ENCODE measurements at regions of chr16 and their contacts with region 1.

Region 1: GRCh38 chr16:69166221-69166833 is 20.6 kb upstream of the SNTB2 start:
- DNase-seq: peak in 5 of 9 experiments; percentile 21 to 60 (median 37)
- ATAC-seq: peak; percentile 86
- H3K4me3 ChIP-seq: no peak overlapping the region
- H3K4me3 Mint-ChIP-seq: peak overlapping the region; percentile 38
- H3K27ac ChIP-seq: peak overlapping the region in 1 of 2 experiments; percentile 30
- H3K27ac Mint-ChIP-seq: peak overlapping the region; percentile 75
- H3K4me1 ChIP-seq: peaks cover 13% of the 10 kb centered on the region
- H3K4me1 Mint-ChIP-seq: peaks cover 22% of the 10 kb centered on the region
- H3K27me3 ChIP-seq: no peaks in the 10 kb centered on the region
- H3K27me3 Mint-ChIP-seq: no peaks in the 10 kb centered on the region
- CTCF ChIP-seq: no peak

Region 2: GRCh38 chr16:69150146-69150865 is 16.0 kb before region 1 on chr16:
- CTCF ChIA-PET with region 1: interaction called, 10 read pairs
- POLR2A ChIA-PET with region 1: interaction called, 3 read pairs
- intact Hi-C with region 1: no loop called
- DNase-seq: peak in 7 of 9 experiments; percentile 32 to 81 (median 60)
- ATAC-seq: peak; percentile 77
- H3K4me3 ChIP-seq: no peak overlapping the region
- H3K4me3 Mint-ChIP-seq: no peak overlapping the region
- H3K27ac ChIP-seq: no peak overlapping the region
- H3K27ac Mint-ChIP-seq: no peak overlapping the region
- H3K4me1 ChIP-seq: no peaks in the 10 kb centered on the region
- H3K4me1 Mint-ChIP-seq: no peaks in the 10 kb centered on the region
- H3K27me3 ChIP-seq: no peaks in the 10 kb centered on the region
- H3K27me3 Mint-ChIP-seq: no peaks in the 10 kb centered on the region
- CTCF ChIP-seq: peak; percentile 71

Region 3: GRCh38 chr16:70610273-70611223 is 1444.2 kb after region 1 on chr16:
- CTCF ChIA-PET with region 1: no interaction called
- POLR2A ChIA-PET with region 1: no interaction called
- intact Hi-C with region 1: loop called in 1 of 2 experiments (anchors 5 kb)
- DNase-seq: no peak
- ATAC-seq: no peak
- H3K4me3 ChIP-seq: no peak overlapping the region
- H3K4me3 Mint-ChIP-seq: no peak overlapping the region
- H3K27ac ChIP-seq: no peak overlapping the region
- H3K27ac Mint-ChIP-seq: no peak overlapping the region
- H3K4me1 ChIP-seq: no peaks in the 10 kb centered on the region
- H3K4me1 Mint-ChIP-seq: no peaks in the 10 kb centered on the region
- H3K27me3 ChIP-seq: no peaks in the 10 kb centered on the region
- H3K27me3 Mint-ChIP-seq: no peaks in the 10 kb centered on the region
- CTCF ChIP-seq: no peak

Measured in CD8-positive, alpha-beta T cell (primary cell).